ENCODE measurements at regions of chr3 and their contacts with region 1.

Region 1: GRCh38 chr3:192795021-192795420 is 67.7 kb upstream of the FGF12 start:
- DNase-seq: peak; percentile 7
- ATAC-seq: no peak
- H3K4me3 ChIP-seq: no peak overlapping the region
- H3K27ac ChIP-seq: no peak overlapping the region
- H3K4me1 ChIP-seq: no peaks in the 10 kb centered on the region
- H3K27me3 ChIP-seq: no peaks in the 10 kb centered on the region
- CTCF ChIP-seq: no peak
- POLR2A ChIP-seq: no peak
- RAD21 ChIP-seq: no peak

Region 2: DNA sequence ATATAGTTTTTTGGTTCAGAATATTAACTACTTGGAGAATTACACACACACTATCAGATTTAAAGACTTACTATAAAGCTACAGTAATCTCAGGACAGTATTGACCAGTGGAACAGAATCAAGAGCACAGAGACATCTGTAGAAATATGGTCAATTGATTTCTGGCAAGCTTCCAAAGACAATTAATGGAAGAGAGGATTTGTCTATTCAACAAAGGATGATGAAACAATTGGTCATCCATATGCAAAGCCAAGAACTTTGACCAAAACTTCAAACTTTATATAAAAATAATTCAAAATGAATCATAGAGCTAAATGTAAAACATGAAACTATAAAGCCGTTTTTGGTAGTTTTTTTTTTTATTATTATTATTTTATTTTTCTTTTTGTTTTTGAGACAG is 152.4 kb after region 1 on chr3:
- CTCF ChIA-PET with region 1: no interaction called
- POLR2A ChIA-PET with region 1: no interaction called
- dilution Hi-C with region 1: no loop called
- in situ Hi-C with region 1: no loop called
- intact Hi-C with region 1: no loop called
- DNase-seq: peak; percentile 10
- ATAC-seq: no peak
- H3K4me3 ChIP-seq: no peak overlapping the region
- H3K27ac ChIP-seq: no peak overlapping the region
- H3K4me1 ChIP-seq: no peaks in the 10 kb centered on the region
- H3K27me3 ChIP-seq: 0 out of 2 replicates have a peak, but pooled peaks cover 2% of the 10 kb centered on the region
- CTCF ChIP-seq: no peak
- POLR2A ChIP-seq: no peak
- RAD21 ChIP-seq: no peak

Region 3: GRCh38 chr3:193040836-193041672 is 246.0 kb after region 1 on chr3:
- CTCF ChIA-PET with region 1: interaction called, 10 read pairs
- POLR2A ChIA-PET with region 1: no interaction called
- dilution Hi-C with region 1: no loop called
- in situ Hi-C with region 1: no loop called
- intact Hi-C with region 1: no loop called
- DNase-seq: peak; percentile 60
- ATAC-seq: peak; percentile 56; the same call in 1 of the 2 replicates
- H3K4me3 ChIP-seq: no peak overlapping the region
- H3K27ac ChIP-seq: no peak overlapping the region
- H3K4me1 ChIP-seq: no peaks in the 10 kb centered on the region
- H3K27me3 ChIP-seq: no peaks in the 10 kb centered on the region; the same call in 1 of the 2 replicates
- CTCF ChIP-seq: peak; percentile 65
- POLR2A ChIP-seq: no peak
- RAD21 ChIP-seq: peak; percentile 77

Region 4: GRCh38 chr3:193943200-193943599 is 1148.2 kb after region 1 on chr3:
- CTCF ChIA-PET with region 1: no interaction called
- POLR2A ChIA-PET with region 1: no interaction called
- dilution Hi-C with region 1: no loop called
- in situ Hi-C with region 1: no loop called
- intact Hi-C with region 1: no loop called
- DNase-seq: no peak
- ATAC-seq: no peak
- H3K4me3 ChIP-seq: no peak overlapping the region
- H3K27ac ChIP-seq: no peak overlapping the region
- H3K4me1 ChIP-seq: no peaks in the 10 kb centered on the region
- H3K27me3 ChIP-seq: peaks cover 28% of the 10 kb centered on the region
- CTCF ChIP-seq: no peak
- POLR2A ChIP-seq: no peak
- RAD21 ChIP-seq: no peak

Measured in IMR-90 (cell line).